CD4-positive, alpha-beta memory T cell (primary cell): ENCODE measurements at regions of chr11 and their contacts with region 1.

Region 1: GRCh38 chr11:36354221-36355003 is 58.3 kb downstream of the PRR5L start:
- DNase-seq: no peak
- H3K4me3 ChIP-seq: no peak overlapping the region
- H3K4me3 Mint-ChIP-seq: peak overlapping the region in 5 of 8 donors; percentile 1 to 23 (median 14)
- H3K27ac ChIP-seq: no peak overlapping the region
- H3K27ac Mint-ChIP-seq: peak overlapping the region in 5 of 7 donors; percentile 29 to 92 (median 76)
- H3K4me1 ChIP-seq: peaks cover 64% of the 10 kb centered on the region
- H3K4me1 Mint-ChIP-seq: peaks cover 29 to 78% (median 52%) of the 10 kb centered on the region in 4 donors
- H3K27me3 ChIP-seq: no peaks in the 10 kb centered on the region
- H3K27me3 Mint-ChIP-seq: peaks cover 2% of the 10 kb centered on the region in 2 donors

Region 2: DNA sequence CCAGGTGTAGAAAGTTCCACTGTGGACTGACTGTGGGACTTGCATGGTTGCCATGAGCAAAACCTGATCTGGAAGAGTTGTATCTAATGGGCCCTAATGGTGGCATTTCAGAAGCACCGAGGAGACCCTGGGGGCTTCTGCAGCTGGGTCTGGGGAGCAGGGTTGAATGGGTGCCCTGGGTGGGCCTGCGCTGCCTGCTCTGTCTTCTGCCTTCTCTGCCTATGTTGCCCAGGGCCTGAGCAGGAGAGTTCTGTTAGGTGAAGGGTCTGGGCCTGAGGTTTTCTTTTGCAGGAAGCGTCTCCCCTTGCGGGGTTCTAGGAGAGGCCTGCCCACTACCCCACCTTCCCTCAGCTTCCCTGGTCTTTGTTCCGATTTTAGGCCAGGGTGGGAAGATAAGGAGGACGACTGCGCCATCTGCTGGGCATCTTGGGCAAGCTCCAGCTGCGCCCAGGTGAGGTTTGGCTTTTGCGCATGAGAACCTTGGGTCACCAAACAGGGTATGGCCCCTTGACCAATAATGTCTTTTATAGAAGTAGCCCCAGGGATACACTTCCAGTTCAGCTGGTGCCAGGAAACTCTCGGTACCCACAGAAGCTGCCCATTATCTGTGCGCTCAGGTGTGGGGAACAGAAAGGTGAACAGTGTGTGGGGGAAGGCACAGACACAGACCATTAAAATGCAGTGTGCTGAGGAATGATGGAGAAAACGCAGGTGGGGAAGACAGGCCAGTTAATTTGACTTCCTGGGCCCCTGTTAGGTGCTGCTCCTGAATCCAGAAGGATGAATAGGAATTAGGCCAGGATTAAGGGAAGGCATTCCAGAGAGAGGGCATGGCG is 88.4 kb before region 1 on chr11:
- CTCF ChIA-PET with region 1: no interaction called
- POLR2A ChIA-PET with region 1: no interaction called
- intact Hi-C with region 1: no loop called
- DNase-seq: peak in 4 of 5 donors; percentile 30 to 46 (median 36)
- H3K4me3 ChIP-seq: no peak overlapping the region
- H3K4me3 Mint-ChIP-seq: no peak overlapping the region
- H3K27ac ChIP-seq: no peak overlapping the region
- H3K27ac Mint-ChIP-seq: no peak overlapping the region
- H3K4me1 ChIP-seq: no peaks in the 10 kb centered on the region
- H3K4me1 Mint-ChIP-seq: peaks cover 0 to 3% (median 0%) of the 10 kb centered on the region in 4 donors
- H3K27me3 ChIP-seq: no peaks in the 10 kb centered on the region
- H3K27me3 Mint-ChIP-seq: peaks cover 7 to 11% of the 10 kb centered on the region in 2 donors

Region 3: DNA sequence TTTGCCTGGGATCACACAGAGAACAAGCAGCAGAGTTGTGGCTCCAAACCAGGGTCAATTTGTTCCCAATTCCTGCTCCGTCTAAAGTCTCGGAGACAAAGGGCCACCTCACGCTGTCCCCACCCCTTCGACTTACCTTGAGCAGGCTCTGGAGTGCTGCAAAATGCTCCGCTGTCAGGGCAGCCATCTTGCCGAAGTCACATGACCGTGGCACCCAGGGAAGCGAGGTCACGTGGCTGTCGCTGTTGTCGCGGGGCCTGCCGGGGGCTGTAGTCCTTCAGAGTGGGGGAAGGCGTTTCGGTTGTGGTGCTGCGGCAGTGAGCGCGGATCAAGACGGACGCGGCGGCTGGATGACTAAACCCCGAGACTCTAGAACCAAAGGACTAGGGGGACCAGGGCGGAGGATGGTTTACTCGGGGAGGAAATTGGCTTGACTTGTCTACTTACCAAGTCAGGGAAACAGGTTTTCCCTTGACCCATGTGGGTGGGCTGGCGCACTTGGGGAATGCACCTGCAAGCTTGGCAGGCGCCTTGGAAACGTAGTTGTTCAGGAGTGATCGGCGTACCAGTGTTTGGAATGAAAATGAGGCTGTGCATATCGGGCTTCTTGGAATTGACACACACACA is 65.1 kb before region 1 on chr11 and contains the start of gene COMMD9:
- CTCF ChIA-PET with region 1: interaction called, 26 read pairs
- POLR2A ChIA-PET with region 1: interaction called, 5 read pairs
- intact Hi-C with region 1: loop called (anchors 1 kb)
- DNase-seq: peak; percentile 89 to 96 (median 91)
- H3K4me3 ChIP-seq: peak within 1 kb of the TSS; percentile 73 to 95
- H3K4me3 Mint-ChIP-seq: peak within 1 kb of the TSS; percentile 88 to 97 (median 95)
- H3K27ac ChIP-seq: peak within 1 kb of the TSS; percentile 31
- H3K27ac Mint-ChIP-seq: peak within 1 kb of the TSS; percentile 65 to 96 (median 93)
- H3K4me1 ChIP-seq: peaks cover 19% of the 10 kb centered on the region
- H3K4me1 Mint-ChIP-seq: peaks cover 25 to 46% (median 37%) of the 10 kb centered on the region in 4 donors
- H3K27me3 ChIP-seq: no peaks in the 10 kb centered on the region
- H3K27me3 Mint-ChIP-seq: no peaks in the 10 kb centered on the region
- total RNA-seq, gene COMMD9: 33.9 to 41.4 TPM

Region 4: DNA sequence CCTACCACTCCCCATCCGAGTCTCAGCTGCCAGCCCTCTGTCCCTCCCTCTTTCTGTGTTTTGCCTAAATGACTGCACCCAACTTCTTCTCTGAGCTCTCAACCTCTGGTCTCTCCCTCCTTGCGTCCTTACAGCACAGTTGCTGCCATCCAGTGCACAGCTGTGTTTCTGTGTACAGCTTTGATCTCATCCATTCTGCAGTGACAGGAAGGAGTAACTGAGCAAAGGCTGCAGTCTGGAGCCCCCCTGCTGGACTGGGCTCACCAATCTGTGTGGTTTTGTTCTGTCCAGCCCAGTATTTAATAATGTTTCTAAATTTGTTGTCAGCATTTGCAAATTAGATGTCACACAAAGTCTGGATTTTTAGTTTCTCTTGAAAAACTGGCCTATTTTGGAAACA is 14.5 kb before region 1 on chr11:
- CTCF ChIA-PET with region 1: interaction called, 16 read pairs
- POLR2A ChIA-PET with region 1: no interaction called
- intact Hi-C with region 1: no loop called
- DNase-seq: no peak
- H3K4me3 ChIP-seq: no peak overlapping the region
- H3K4me3 Mint-ChIP-seq: no peak overlapping the region
- H3K27ac ChIP-seq: no peak overlapping the region
- H3K27ac Mint-ChIP-seq: no peak overlapping the region
- H3K4me1 ChIP-seq: no peaks in the 10 kb centered on the region
- H3K4me1 Mint-ChIP-seq: peaks cover 0 to 2% (median 0%) of the 10 kb centered on the region in 4 donors
- H3K27me3 ChIP-seq: no peaks in the 10 kb centered on the region
- H3K27me3 Mint-ChIP-seq: peaks cover 5 to 14% of the 10 kb centered on the region in 2 donors

Region 5: DNA sequence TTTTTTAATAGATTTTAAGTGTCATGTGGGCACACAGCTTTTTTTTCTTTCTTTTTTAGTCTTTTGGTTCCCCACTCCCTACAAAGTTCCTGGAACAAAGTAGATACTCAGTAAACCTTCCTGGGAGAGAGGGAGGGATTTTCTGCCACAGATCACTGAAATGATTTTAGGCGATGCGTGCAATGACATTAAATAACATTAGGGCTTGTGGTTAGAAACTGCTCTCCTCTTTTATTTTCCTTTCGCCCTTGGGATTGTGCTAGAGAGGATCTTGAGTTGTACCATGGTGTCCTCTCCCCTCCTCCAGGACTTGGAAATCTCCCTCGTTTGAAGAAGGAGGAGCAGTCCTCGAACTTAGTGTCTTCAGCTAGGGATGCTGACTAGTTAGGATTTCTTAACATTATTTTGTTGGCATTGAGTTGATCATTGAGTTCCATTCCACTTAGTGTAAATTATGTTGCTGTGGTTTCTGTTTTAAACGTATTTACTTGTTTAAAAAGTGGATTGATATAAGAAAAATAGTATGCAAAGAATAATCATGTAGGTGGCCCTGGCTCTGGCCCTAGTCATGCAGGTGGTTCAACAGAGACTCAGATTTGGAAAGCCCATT is 67.2 kb after region 1 on chr11:
- CTCF ChIA-PET with region 1: interaction called, 8 read pairs
- POLR2A ChIA-PET with region 1: interaction called, 10 read pairs
- intact Hi-C with region 1: no loop called
- DNase-seq: no peak
- H3K4me3 ChIP-seq: no peak overlapping the region
- H3K4me3 Mint-ChIP-seq: peak overlapping the region in 7 of 8 donors; percentile 60 to 86 (median 68)
- H3K27ac ChIP-seq: no peak overlapping the region
- H3K27ac Mint-ChIP-seq: peak overlapping the region; percentile 77 to 93 (median 85)
- H3K4me1 ChIP-seq: peaks cover 69% of the 10 kb centered on the region
- H3K4me1 Mint-ChIP-seq: peaks cover 34 to 81% (median 62%) of the 10 kb centered on the region in 4 donors
- H3K27me3 ChIP-seq: no peaks in the 10 kb centered on the region
- H3K27me3 Mint-ChIP-seq: no peaks in the 10 kb centered on the region

Region 6: GRCh38 chr11:36469063-36469462 is 114.7 kb after region 1 on chr11:
- CTCF ChIA-PET with region 1: interaction called, 13 read pairs
- POLR2A ChIA-PET with region 1: interaction called, 3 read pairs
- intact Hi-C with region 1: no loop called
- DNase-seq: no peak
- H3K4me3 ChIP-seq: no peak overlapping the region
- H3K4me3 Mint-ChIP-seq: no peak overlapping the region
- H3K27ac ChIP-seq: no peak overlapping the region
- H3K27ac Mint-ChIP-seq: peak overlapping the region in 2 of 7 donors; percentile 31 to 88
- H3K4me1 ChIP-seq: no peaks in the 10 kb centered on the region
- H3K4me1 Mint-ChIP-seq: peaks cover 2 to 8% (median 3%) of the 10 kb centered on the region in 4 donors
- H3K27me3 ChIP-seq: no peaks in the 10 kb centered on the region
- H3K27me3 Mint-ChIP-seq: no peaks in the 10 kb centered on the region

Region 7: DNA sequence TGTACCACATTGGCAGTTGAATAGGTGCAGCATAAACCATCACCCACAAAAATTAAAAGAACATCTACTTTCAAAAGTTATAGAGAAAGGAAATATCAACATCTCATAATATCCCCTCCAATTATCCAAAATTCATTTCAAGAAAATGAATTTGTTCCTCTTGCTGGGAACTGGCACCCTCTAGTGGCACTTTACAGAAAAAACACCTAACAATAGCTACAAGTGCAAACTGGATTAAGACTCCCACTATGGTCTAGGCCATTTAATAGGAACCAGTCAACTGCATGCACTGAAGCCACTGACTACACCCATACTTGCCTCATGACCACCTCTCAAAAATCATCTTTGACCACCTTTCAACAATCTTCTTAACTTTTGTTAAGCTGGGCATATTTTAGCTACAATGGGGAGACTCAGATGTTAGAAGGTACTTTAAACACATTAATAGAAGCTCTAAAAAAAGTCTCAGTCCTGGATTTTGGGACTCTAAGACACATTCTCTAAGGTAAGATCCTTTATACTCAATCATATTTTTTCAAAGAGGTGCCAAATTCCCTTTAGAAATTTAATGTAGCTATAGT is 138.4 kb after region 1 on chr11:
- CTCF ChIA-PET with region 1: interaction called, 35 read pairs
- POLR2A ChIA-PET with region 1: interaction called, 14 read pairs
- intact Hi-C with region 1: loop called (anchors 1 kb)
- DNase-seq: peak in 4 of 5 donors; percentile 42 to 54 (median 46)
- H3K4me3 ChIP-seq: no peak overlapping the region
- H3K4me3 Mint-ChIP-seq: no peak overlapping the region
- H3K27ac ChIP-seq: no peak overlapping the region
- H3K27ac Mint-ChIP-seq: peak overlapping the region in 5 of 7 donors; percentile 18 to 76 (median 26)
- H3K4me1 ChIP-seq: peaks cover 13% of the 10 kb centered on the region
- H3K4me1 Mint-ChIP-seq: peaks cover 13 to 31% (median 17%) of the 10 kb centered on the region in 4 donors
- H3K27me3 ChIP-seq: no peaks in the 10 kb centered on the region
- H3K27me3 Mint-ChIP-seq: no peaks in the 10 kb centered on the region

Region 8: DNA sequence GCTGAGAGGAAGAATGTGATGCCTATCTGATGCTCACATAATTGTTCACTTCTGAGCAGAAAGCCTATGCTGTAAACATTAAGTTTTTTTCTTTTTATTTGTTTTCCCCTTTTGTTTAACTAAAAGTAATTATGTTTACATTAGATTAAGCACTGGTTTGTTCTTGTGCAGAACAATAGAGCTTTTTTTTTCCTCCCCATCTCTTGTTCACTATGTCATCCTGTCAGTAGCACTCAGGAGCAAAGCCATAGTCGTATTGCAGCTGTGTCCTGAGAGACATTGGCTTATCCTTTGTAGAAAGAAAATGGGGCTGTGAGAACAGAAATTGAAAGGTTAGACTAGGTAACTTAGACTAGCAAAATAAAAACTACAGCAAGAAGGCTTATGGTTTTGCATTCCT is 545.4 kb after region 1 on chr11:
- CTCF ChIA-PET with region 1: no interaction called
- POLR2A ChIA-PET with region 1: no interaction called
- intact Hi-C with region 1: no loop called
- DNase-seq: no peak
- H3K4me3 ChIP-seq: no peak overlapping the region
- H3K4me3 Mint-ChIP-seq: no peak overlapping the region
- H3K27ac ChIP-seq: no peak overlapping the region
- H3K27ac Mint-ChIP-seq: no peak overlapping the region
- H3K4me1 ChIP-seq: no peaks in the 10 kb centered on the region
- H3K4me1 Mint-ChIP-seq: no peaks in the 10 kb centered on the region
- H3K27me3 ChIP-seq: no peaks in the 10 kb centered on the region
- H3K27me3 Mint-ChIP-seq: no peaks in the 10 kb centered on the region